Motor neuron (in vitro differentiated cells): ENCODE measurements at regions of chr3 and their contacts with region 1.

Region 1: GRCh38 chr3:22939349-22939748 is 263.8 kb upstream of the UBE2E2 start:
- ATAC-seq: peak in 1 of 8 experiments; percentile 37
- H3K4me3 ChIP-seq: no peak overlapping the region
- H3K27ac ChIP-seq: no peak overlapping the region
- H3K4me1 ChIP-seq: no peaks in the 10 kb centered on the region

Region 2: GRCh38 chr3:22555753-22556435 is 383.5 kb before region 1 on chr3:
- in situ Hi-C with region 1: loop called in 1 of 9 experiments (anchors 25 kb)
- ATAC-seq: no peak
- H3K4me3 ChIP-seq: no peak overlapping the region
- H3K27ac ChIP-seq: no peak overlapping the region
- H3K4me1 ChIP-seq: no peaks in the 10 kb centered on the region

Region 3: GRCh38 chr3:22704571-22705354 is 234.6 kb before region 1 on chr3:
- in situ Hi-C with region 1: no loop called
- ATAC-seq: no peak
- H3K4me3 ChIP-seq: no peak overlapping the region
- H3K27ac ChIP-seq: no peak overlapping the region
- H3K4me1 ChIP-seq: no peaks in the 10 kb centered on the region